ENCODE measurements at regions of chr5 and their contacts with region 1.

Region 1: DNA sequence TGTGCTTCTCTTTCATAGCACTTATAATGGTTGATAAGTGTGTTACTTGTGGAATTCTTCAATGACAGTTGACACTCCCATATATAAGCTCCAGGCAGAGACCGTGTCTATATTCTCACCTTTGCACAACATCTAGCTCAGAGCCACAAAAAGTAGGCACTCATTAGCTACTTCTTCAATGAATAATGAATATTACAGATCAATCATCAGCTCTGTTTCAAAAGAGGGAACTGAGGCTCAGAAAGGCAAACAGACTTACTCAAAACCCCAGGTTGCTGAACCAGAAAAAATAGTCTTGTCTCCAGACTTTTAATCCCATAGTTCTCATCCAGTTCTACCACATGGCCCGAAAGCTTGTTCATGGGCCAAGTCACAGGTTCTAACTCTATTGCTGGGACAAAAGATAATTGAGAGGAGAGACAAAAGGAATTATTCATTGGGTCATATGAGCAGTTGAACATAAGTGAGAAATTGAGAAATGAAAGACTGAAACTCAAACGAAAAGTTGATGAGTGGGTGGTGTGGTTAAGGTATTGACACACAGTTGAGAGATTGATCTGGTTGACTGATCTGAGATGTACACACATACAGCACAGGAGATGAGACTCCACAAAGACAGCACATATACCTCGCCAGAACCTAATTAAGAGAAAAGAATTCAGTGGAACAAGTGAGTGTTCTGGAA is 381.6 kb downstream of the EFNA5 start:
- DNase-seq: no peak
- H3K4me3 Mint-ChIP-seq: no peak overlapping the region
- H3K27ac Mint-ChIP-seq: peak overlapping the region; percentile 49
- H3K4me1 Mint-ChIP-seq: peaks cover 46% of the 10 kb centered on the region
- H3K27me3 Mint-ChIP-seq: peaks cover 4% of the 10 kb centered on the region

Region 2: GRCh38 chr5:107090506-107090905 is 198.7 kb before region 1 on chr5:
- intact Hi-C with region 1: no loop called
- DNase-seq: no peak
- H3K4me3 Mint-ChIP-seq: no peak overlapping the region
- H3K27ac Mint-ChIP-seq: no peak overlapping the region
- H3K4me1 Mint-ChIP-seq: no peaks in the 10 kb centered on the region
- H3K27me3 Mint-ChIP-seq: no peaks in the 10 kb centered on the region

Region 3: GRCh38 chr5:107149243-107150005 is 139.7 kb before region 1 on chr5:
- intact Hi-C with region 1: loop called (anchors 5 kb)
- DNase-seq: no peak
- H3K4me3 Mint-ChIP-seq: no peak overlapping the region
- H3K27ac Mint-ChIP-seq: no peak overlapping the region
- H3K4me1 Mint-ChIP-seq: peaks cover 4% of the 10 kb centered on the region
- H3K27me3 Mint-ChIP-seq: peaks cover 5% of the 10 kb centered on the region

Region 4: GRCh38 chr5:107306597-107306996 is 17.4 kb after region 1 on chr5:
- intact Hi-C with region 1: loop called (anchors 1 kb)
- DNase-seq: no peak
- H3K4me3 Mint-ChIP-seq: no peak overlapping the region
- H3K27ac Mint-ChIP-seq: no peak overlapping the region
- H3K4me1 Mint-ChIP-seq: peaks cover 11% of the 10 kb centered on the region
- H3K27me3 Mint-ChIP-seq: peaks cover 12% of the 10 kb centered on the region

Region 5: GRCh38 chr5:107486489-107486888 is 197.3 kb after region 1 on chr5:
- intact Hi-C with region 1: loop called (anchors 1 kb)
- DNase-seq: peak; percentile 29
- H3K4me3 Mint-ChIP-seq: no peak overlapping the region
- H3K27ac Mint-ChIP-seq: no peak overlapping the region
- H3K4me1 Mint-ChIP-seq: peaks cover 23% of the 10 kb centered on the region
- H3K27me3 Mint-ChIP-seq: peaks cover 19% of the 10 kb centered on the region

Region 6: GRCh38 chr5:107571621-107572536 is 282.7 kb after region 1 on chr5:
- intact Hi-C with region 1: loop called (anchors 10 kb)
- DNase-seq: peak; percentile 76
- H3K4me3 Mint-ChIP-seq: peak overlapping the region; percentile 56
- H3K27ac Mint-ChIP-seq: no peak overlapping the region
- H3K4me1 Mint-ChIP-seq: peaks cover 18% of the 10 kb centered on the region
- H3K27me3 Mint-ChIP-seq: peaks cover 36% of the 10 kb centered on the region